Cardiac septum (tissue), 1 donor: ENCODE measurements at regions of chr3 and their contacts with region 1.

Region 1: DNA sequence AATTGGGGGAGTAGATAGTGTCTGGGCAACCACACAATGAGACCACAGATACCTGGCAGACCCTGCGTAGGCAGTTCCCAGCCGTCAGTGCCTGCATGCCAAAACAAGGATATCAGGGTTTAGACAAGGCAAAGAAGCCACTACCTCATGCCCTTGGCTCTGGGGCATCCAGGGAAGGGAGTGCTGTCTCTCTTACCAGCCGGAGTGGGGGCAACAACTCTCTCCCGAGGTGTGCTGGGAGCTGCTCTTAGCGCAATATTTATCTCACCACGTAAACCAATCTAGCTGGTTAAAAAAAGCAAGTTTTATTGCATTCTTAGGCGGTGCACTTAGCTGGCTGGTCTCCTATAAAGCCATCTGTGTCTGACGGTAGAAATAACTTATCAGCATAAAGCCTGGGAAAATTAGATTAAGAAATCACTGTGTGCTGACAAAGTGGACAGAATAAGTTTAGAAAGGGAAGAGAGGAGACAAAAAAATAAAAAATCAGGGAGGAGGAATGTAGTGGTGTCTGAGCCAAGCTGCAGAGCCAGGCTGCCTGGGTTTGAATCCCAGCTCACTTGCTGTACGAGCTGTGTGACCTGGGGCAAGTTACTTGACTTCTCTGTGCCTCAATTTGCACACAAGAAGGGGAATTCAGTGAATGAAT is 273.2 kb downstream of the PDZRN3 start:
- DNase-seq: no peak

Region 2: DNA sequence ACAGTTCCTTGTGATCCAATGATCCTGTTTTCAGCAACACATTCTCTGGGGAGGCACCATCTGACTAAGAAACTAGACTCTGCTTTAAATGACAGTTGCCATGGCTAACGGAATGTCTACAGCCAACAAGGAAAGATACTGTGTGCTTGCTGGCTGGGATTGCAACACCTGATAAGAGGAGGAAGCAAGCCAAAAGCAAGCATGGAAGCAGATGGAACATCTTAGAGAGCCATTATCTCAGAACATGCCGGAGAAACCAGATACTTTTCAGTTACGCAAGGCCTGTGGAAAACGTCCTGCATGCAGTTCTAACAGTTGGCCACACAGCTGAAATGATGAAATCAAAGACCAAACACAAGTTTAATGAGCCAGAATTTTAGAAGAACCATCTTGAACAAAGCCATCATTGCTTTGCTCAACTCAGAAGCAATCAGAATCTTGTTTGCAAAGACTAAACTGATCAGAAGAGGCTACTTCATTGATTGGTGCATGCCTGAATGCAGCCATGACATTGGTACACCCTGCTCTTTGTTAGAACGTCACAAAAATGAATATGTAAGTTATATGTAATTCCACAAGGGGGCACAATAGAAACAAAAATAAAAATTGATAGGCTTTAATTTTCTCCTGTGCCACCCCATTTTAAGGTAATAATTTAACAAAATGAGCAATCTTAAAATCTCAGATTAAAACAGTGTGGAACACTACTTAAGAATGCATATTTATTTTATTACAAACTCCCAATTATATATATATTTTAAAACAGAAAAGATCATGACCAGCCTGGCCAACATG is 412.9 kb before region 1 on chr3:
- intact Hi-C with region 1: no loop called
- DNase-seq: no peak

Region 3: GRCh38 chr3:73148682-73149081 is 202.9 kb before region 1 on chr3:
- intact Hi-C with region 1: loop called (anchors 5 kb)
- DNase-seq: no peak

Region 4: DNA sequence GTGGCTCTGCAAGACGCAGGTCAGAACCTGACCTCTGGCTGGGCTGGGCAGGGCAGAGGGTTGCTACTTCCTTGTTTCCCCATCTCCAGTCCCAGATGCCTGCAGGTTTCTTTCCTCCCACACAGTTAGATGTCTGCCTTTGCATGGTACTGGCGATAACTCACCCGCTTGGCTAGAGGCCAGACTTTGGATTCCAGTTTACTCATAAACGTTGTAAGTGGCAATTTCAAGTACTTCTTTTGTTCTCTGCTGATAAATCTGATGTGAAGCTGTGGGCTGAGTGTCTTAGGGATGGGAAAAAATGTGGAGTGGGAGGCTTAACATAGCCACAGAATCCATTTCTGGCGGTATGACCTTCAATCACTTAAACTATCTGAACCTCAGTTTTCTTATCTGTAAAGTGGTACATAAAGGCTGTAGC is 95.9 kb before region 1 on chr3:
- intact Hi-C with region 1: loop called (anchors 5 kb)
- DNase-seq: no peak

Region 5: GRCh38 chr3:73580343-73580742 is 228.8 kb after region 1 on chr3:
- intact Hi-C with region 1: no loop called
- DNase-seq: no peak